ENCODE measurements at regions of chr11 and their contacts with region 1.

Region 1: GRCh38 chr11:4626207-4627099 is 10.8 kb upstream of the OR51D1 start:
- DNase-seq: no peak
- ATAC-seq: peak; percentile 86
- H3K4me3 ChIP-seq: no peak overlapping the region
- H3K27ac ChIP-seq: no peak overlapping the region
- H3K4me1 ChIP-seq: no peaks in the 10 kb centered on the region
- H3K27me3 ChIP-seq: no peaks in the 10 kb centered on the region
- CTCF ChIP-seq: peak; percentile 63 to 65 (median 65)
- EP300 ChIP-seq: no peak
- POLR2A ChIP-seq: no peak
- RAD21 ChIP-seq: peak; percentile 61

Region 2: DNA sequence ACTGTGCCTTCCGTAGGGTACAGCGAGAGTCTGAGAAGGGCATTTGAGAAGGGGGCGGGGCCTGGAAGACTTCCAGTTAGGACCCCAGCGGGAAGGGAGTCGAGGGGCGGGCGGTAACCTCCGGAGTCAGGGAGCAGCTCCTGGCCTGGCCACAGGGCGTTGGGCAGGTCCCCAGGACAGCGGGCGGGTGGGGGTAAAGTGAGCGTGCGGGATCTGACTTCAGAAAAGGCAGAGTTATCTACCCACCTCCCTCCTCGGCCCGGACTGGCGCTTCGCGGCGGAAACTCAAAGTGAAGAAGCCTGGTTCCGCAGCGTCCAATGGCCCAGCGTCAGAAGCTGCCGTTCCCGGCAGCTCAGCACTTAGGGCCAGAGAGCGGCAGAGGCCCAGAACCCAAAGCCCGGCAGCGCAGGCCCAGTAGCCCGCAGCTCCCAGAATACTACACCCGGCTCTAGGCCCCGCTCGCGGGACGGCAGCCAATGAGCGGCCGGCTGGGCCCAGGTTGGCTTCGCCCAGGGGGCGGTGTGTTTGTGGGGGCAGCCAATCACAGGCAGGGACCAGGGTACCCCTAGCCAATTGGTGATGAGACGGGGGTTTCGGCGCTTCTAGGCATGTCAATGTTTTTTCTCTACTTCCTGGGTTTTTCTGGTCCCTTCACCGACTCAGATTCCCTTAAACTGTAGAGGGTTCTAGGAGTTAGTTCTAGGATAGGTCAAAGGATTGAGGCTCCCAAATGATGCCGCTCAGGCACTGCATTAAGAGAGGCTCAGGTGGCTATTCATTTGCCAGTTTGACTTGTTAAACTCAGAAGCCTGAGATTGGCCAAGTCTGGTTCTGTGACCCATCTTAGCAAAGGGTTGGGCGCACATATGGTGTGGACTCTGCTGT is 18.4 kb before region 1 on chr11 and contains the start of gene TRIM68:
- CTCF ChIA-PET with region 1: interaction called, 13 read pairs
- POLR2A ChIA-PET with region 1: no interaction called
- RAD21 ChIA-PET with region 1: no interaction called
- SMC1A ChIA-PET with region 1: interaction called, 4 read pairs
- in situ Hi-C with region 1: no loop called
- intact Hi-C with region 1: no loop called
- DNase-seq: peak; percentile 82
- ATAC-seq: peak; percentile 100
- H3K4me3 ChIP-seq: peak within 1 kb of the TSS; percentile 70
- H3K27ac ChIP-seq: peak within 1 kb of the TSS; percentile 77
- H3K4me1 ChIP-seq: peaks cover 3% of the 10 kb centered on the region; the same call in 1 of the 2 replicates
- H3K27me3 ChIP-seq: no peaks in the 10 kb centered on the region
- CTCF ChIP-seq: no peak
- EP300 ChIP-seq: no peak
- POLR2A ChIP-seq: peak; percentile 84
- RAD21 ChIP-seq: no peak
- polyA plus RNA-seq, gene TRIM68: 3.3 to 5.4 TPM

Region 3: DNA sequence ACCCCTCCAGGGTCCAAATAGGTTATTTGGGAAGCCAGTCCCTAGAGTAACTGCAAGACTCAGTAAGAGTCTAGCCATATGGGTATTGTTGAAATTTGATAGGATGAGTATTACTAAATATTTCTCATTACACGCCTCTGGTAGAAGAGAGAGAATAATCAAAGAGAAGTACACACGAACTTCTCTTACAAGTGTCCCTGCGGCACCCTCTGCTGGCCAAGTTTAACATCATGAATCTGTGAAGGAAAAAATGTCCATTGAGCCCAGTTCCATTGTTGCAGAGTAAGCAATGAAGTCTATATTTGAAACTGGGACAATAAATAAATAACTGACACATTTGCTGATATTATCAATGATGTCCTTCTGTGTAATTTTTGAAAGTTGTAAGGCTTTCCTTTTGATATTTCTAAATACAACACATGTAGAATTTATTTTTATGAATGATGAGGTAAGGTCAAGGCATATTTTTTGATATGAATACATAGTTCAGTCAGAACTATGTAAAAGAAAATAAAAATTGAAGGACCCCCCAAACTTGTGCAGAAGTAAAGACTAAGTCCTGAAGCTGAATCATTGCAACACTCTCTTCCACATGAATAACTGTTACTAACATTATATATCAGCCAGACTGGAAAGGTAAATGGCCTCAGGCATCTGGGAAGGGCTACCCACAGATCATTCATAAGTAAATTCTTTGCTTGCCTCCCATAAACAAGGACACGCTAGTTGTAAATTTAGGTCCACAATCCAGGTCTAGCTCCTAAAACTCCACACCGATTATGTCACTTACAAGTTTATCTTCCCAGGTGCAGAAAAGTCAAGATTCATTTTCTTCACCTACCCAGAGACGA is 378.2 kb after region 1 on chr11:
- CTCF ChIA-PET with region 1: interaction called, 5 read pairs
- POLR2A ChIA-PET with region 1: no interaction called
- RAD21 ChIA-PET with region 1: no interaction called
- SMC1A ChIA-PET with region 1: no interaction called
- in situ Hi-C with region 1: no loop called
- intact Hi-C with region 1: loop called (anchors 1 kb)
- DNase-seq: no peak
- ATAC-seq: peak; percentile 70
- H3K4me3 ChIP-seq: no peak overlapping the region
- H3K27ac ChIP-seq: no peak overlapping the region
- H3K4me1 ChIP-seq: no peaks in the 10 kb centered on the region
- H3K27me3 ChIP-seq: no peaks in the 10 kb centered on the region; a peak in 1 of 4 replicates
- CTCF ChIP-seq: peak; percentile 57 to 59 (median 59); a peak in 4 of 6 replicates
- EP300 ChIP-seq: no peak
- POLR2A ChIP-seq: no peak
- RAD21 ChIP-seq: peak; percentile 64

Region 4: GRCh38 chr11:5369793-5370192 is 743.3 kb after region 1 on chr11:
- CTCF ChIA-PET with region 1: interaction called, 4 read pairs
- POLR2A ChIA-PET with region 1: no interaction called
- RAD21 ChIA-PET with region 1: no interaction called
- SMC1A ChIA-PET with region 1: no interaction called
- in situ Hi-C with region 1: loop called (anchors 5 kb)
- intact Hi-C with region 1: no loop called
- DNase-seq: no peak
- ATAC-seq: peak; percentile 83
- H3K4me3 ChIP-seq: no peak overlapping the region
- H3K27ac ChIP-seq: no peak overlapping the region
- H3K4me1 ChIP-seq: no peaks in the 10 kb centered on the region
- H3K27me3 ChIP-seq: no peaks in the 10 kb centered on the region
- CTCF ChIP-seq: peak in 2 of 3 experiments; percentile 22 to 61; a peak in 3 of 6 replicates
- EP300 ChIP-seq: no peak
- POLR2A ChIP-seq: no peak
- RAD21 ChIP-seq: peak; percentile 29

Region 5: GRCh38 chr11:5380740-5381342 is 754.4 kb after region 1 on chr11:
- CTCF ChIA-PET with region 1: no interaction called
- POLR2A ChIA-PET with region 1: no interaction called
- RAD21 ChIA-PET with region 1: no interaction called
- SMC1A ChIA-PET with region 1: no interaction called
- in situ Hi-C with region 1: no loop called
- intact Hi-C with region 1: loop called (anchors 5 kb)
- DNase-seq: no peak
- ATAC-seq: peak; percentile 98
- H3K4me3 ChIP-seq: no peak overlapping the region
- H3K27ac ChIP-seq: no peak overlapping the region
- H3K4me1 ChIP-seq: no peaks in the 10 kb centered on the region
- H3K27me3 ChIP-seq: no peaks in the 10 kb centered on the region
- CTCF ChIP-seq: peak; percentile 71 to 83 (median 80)
- EP300 ChIP-seq: no peak
- POLR2A ChIP-seq: no peak
- RAD21 ChIP-seq: peak; percentile 83